Heart right ventricle (tissue), 16 donors: ENCODE measurements at regions of chr12 and their contacts with region 1.

Region 1: DNA sequence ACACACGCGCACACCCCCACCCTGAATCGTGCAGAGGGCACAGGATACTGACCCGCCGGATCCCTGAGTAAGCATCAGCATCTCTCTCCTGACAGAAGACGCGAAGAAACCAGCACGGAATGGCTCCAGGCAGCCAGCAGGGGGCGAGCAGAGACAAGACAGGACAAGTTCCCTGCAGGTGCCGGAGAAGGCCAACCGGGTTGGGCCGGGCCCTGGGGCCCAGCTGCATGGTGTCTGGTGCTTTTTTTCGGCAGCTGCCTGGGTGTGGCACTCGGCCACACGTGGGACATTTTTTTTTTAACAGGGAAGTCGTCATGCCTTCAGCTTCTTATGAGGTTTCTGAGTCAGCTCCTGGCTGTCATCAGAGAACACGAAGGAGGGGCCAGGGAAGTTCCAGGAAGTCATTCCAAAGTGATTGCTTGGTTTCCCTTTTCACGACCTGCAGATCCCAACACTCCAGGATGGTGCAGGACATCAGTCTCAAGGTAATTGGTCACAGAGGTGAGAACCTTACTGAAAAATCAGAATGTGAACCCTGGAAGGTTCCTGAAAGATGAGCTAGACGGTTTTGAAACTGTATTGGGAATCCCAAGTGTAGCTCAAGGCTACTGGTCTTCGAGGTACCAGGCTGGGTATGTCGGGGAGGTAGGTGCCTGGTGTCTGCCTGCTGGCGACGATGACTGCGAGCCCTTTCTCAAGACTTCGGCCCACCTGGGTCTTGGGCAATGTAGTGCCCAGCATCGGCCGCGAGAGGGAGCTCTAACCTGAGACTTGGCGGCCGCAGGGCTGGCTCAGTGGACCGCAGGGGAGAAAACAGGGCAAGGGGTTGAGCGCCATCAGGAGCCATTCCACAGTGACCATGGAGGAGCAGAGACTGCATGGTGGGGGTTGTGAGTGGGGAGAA is 190.8 kb upstream of the PRMT8 start:
- DNase-seq: peak; percentile 87 to 90
- ATAC-seq: peak; percentile 57 to 84 (median 73)
- H3K4me3 ChIP-seq: peak overlapping the region in 5 of 10 donors; percentile 1 to 11 (median 2)
- H3K27ac ChIP-seq: peak overlapping the region in 5 of 10 donors; percentile 8 to 57 (median 26)
- H3K4me1 ChIP-seq: peaks cover 4 to 34% (median 25%) of the 10 kb centered on the region in 9 donors
- H3K27me3 ChIP-seq: no peaks in the 10 kb centered on the region
- CTCF ChIP-seq: peak; percentile 90 to 97 (median 95)

Region 2: DNA sequence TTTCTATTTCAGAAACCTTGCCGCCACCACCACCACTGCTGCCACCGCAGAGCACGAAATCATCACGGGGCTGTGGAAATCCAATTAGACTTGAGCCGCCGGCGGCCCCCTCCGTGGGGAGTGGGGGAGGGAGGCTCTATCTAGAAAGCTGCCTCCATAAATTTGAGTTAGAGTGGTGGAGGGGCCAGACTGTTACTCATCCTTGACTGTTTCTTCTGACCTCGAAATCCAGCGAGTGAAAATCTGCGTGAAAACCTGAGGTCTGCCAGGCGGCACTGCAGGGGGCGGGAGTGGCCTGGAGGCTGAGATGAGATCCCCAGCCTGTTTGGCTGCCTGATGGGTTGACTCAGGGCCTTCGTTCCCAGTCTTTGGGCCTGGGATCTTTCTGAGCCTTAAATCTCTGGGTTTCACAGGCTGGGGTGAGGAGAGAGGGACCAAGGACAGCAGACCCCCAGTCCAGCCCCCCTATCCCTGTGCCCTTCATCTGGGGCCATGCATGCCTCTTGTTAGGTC is 193.1 kb before region 1 on chr12:
- intact Hi-C with region 1: no loop called
- DNase-seq: no peak
- ATAC-seq: peak in 1 of 8 donors; percentile 23
- H3K4me3 ChIP-seq: no peak overlapping the region
- H3K27ac ChIP-seq: peak overlapping the region in 5 of 10 donors; percentile 13 to 71 (median 44)
- H3K4me1 ChIP-seq: peaks cover 28 to 80% (median 57%) of the 10 kb centered on the region in 9 donors
- H3K27me3 ChIP-seq: no peaks in the 10 kb centered on the region
- CTCF ChIP-seq: no peak

Region 3: DNA sequence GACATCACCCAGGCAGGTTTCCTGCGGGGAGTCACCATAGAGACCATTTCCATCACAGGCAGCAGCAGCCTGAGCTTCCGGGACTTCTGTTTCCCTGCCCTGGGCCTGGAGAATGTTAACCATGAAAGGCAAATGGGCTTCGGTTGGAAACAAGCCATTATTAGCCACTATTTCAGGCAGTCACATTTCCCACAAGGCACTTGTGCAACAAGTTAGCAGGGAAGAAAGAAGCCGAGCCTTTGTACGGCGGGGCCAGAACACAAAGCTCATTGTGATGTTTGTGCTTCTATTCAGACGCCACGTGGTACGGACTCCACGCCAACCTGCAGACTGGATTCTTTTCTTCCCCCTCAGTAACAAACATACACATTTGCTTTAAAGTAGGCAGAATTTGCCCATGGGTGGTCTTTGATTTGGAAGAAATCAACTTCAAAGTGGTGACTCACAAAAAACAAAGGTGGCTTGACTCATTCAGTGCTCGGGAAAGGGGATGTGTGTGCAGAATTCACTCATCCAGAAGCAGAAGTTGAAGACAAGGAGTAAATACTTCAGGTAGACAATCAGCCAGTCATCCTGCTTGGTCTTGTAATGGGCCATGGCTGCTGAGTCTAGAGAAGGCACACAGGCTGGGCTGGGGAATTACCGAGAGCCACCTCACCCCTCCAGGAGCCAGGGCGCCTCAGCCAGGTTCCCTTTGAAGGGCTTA is 36.6 kb after region 1 on chr12:
- intact Hi-C with region 1: loop called in 1 of 10 experiments (anchors 5 kb)
- DNase-seq: peak in 1 of 2 donors; percentile 82
- ATAC-seq: peak; percentile 74 to 89 (median 84)
- H3K4me3 ChIP-seq: no peak overlapping the region
- H3K27ac ChIP-seq: peak overlapping the region; percentile 2 to 82 (median 60)
- H3K4me1 ChIP-seq: peaks cover 9 to 57% (median 36%) of the 10 kb centered on the region in 9 donors
- H3K27me3 ChIP-seq: no peaks in the 10 kb centered on the region
- CTCF ChIP-seq: no peak

Region 4: GRCh38 chr12:3641428-3642018 is 341.3 kb after region 1 on chr12:
- intact Hi-C with region 1: loop called in 1 of 10 experiments (anchors 10 kb)
- DNase-seq: no peak
- ATAC-seq: peak in 1 of 8 donors; percentile 25
- H3K4me3 ChIP-seq: no peak overlapping the region
- H3K27ac ChIP-seq: no peak overlapping the region
- H3K4me1 ChIP-seq: peaks cover 0 to 5% (median 4%) of the 10 kb centered on the region in 9 donors
- H3K27me3 ChIP-seq: no peaks in the 10 kb centered on the region
- CTCF ChIP-seq: no peak

Region 5: DNA sequence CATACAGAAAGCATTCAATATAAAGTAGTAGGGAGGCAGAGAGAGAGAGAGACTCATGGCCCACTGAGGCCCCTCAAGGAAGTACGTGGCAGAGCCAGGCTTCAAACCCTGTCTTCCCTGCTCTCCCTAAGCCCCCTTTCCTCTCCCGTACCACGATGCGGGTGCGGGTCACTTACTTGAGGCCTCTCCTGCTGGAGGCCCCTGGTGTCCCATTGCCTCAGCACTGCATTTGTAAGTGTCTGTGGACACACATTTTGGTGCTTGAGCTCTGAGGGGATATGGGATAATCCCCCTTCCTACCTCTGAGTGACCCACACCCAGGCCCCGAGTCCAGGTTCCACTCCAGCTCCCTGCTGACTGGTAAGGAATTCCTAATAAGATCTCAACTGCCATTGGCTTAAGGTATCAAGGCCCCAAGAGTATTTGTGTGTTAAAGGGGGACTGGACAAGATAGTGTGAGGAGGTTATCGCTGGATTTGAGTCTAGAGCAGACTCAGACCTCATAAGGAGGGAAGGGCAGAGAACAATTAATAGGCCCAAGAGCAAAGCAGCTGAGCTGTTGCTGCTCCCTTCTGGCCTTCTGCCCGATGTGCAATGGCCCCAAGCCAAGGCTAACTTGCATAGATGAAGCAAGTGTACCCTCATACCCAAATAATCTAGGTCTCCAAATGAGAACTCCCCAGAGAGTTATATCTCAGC is 380.9 kb after region 1 on chr12:
- intact Hi-C with region 1: loop called in 2 of 10 experiments (anchors 5 to 10 kb)
- DNase-seq: peak; percentile 57 to 81
- ATAC-seq: peak in 4 of 8 donors; percentile 25 to 50 (median 46)
- H3K4me3 ChIP-seq: no peak overlapping the region
- H3K27ac ChIP-seq: peak overlapping the region in 1 of 10 donors; percentile 11
- H3K4me1 ChIP-seq: peaks cover 2 to 46% (median 22%) of the 10 kb centered on the region in 9 donors
- H3K27me3 ChIP-seq: no peaks in the 10 kb centered on the region
- CTCF ChIP-seq: peak in 6 of 9 donors; percentile 11 to 62 (median 48)

Region 6: DNA sequence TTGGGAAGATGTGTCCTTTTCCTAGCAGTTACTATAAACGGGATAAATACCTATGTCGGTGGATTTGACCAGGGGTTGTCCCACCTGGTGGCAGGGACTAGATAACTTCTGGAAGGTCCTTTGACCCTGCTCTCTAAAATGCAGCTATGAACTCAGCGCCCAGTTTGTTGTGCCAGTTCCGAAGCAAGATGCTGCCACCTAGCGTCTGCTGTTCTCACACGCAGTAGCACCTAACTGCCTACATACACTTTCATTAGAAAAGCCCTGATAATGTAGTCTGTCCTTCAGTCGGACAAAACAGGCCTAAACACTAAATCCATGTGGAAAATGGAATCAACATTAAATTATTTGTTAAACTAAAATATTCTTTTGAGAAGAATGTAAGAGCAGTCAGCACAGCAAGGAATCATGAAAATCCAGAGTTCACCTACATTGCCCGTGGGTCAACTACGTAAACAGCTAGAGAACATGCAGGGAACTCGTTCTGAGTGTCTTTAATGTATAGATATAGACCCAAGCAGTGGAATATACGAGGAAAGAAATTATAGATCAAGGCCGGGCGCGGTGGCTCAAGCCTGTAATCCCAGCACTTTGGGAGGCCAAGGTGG is 503.8 kb after region 1 on chr12:
- intact Hi-C with region 1: loop called (anchors 1 to 10 kb)
- DNase-seq: peak; percentile 59 to 67
- ATAC-seq: peak; percentile 61 to 87 (median 76)
- H3K4me3 ChIP-seq: no peak overlapping the region
- H3K27ac ChIP-seq: no peak overlapping the region
- H3K4me1 ChIP-seq: no peaks in the 10 kb centered on the region
- H3K27me3 ChIP-seq: no peaks in the 10 kb centered on the region
- CTCF ChIP-seq: peak; percentile 64 to 90 (median 85)